ENCODE measurements at regions of chr20 and their contacts with region 1.

Region 1: DNA sequence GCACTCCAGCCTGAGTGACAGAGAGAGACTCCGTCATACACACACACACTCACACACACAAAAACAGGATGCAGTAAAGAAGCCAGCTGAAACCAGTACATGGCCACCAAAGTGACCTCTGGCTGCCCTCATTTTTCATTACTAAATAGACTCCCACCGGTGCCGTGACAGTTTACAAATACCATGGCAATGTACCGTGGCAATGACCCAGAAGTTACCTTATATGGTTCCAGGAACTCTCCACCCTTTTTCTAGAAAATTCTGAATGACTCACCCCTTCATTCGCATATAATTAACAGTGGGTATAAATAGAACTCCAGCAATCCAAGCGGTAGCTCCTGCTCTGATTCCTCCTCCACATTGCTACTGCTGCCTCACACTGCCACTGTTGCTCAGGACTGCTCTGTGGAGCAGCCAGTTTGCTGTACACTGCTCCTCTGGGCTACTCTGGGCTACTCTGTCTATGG is 57.7 kb downstream of the SNX5 start:
- DNase-seq: no peak
- H3K4me3 ChIP-seq: no peak overlapping the region
- H3K27ac ChIP-seq: peak overlapping the region; percentile 62 to 88
- H3K4me1 ChIP-seq: peaks cover 0 to 4% of the 10 kb centered on the region in 2 donors
- H3K27me3 ChIP-seq: no peaks in the 10 kb centered on the region
- CTCF ChIP-seq: no peak
- POLR2A ChIP-seq: no peak

Region 2: GRCh38 chr20:17536944-17537444 is 373.9 kb before region 1 on chr20:
- intact Hi-C with region 1: loop called (anchors 5 kb)
- DNase-seq: peak; percentile 65 to 74
- H3K4me3 ChIP-seq: no peak overlapping the region
- H3K27ac ChIP-seq: no peak overlapping the region
- H3K4me1 ChIP-seq: no peaks in the 10 kb centered on the region
- H3K27me3 ChIP-seq: no peaks in the 10 kb centered on the region
- CTCF ChIP-seq: peak; percentile 99
- POLR2A ChIP-seq: no peak

Region 3: DNA sequence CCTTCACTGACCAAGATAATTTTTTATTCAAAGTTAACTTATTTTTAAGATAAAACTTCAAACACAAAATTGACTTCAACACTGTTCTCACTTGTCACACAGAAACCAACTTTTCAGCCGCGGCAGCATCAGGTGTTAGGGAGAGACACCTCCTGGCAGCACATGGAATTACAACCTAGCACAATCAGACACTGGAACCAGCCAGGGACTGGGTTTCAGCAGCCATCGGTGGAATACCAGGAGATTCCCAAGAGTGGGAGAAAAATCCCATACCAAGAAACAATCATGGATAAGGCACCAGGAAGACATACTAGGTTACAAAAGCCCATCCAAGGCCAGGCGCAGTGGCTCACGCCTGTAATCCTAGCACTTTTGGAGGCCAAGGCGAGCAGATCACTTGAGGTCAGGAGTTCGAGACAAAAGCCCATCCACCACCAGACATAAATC is 12.3 kb before region 1 on chr20:
- intact Hi-C with region 1: loop called (anchors 1 kb)
- DNase-seq: peak; percentile 76 to 83
- H3K4me3 ChIP-seq: no peak overlapping the region
- H3K27ac ChIP-seq: no peak overlapping the region
- H3K4me1 ChIP-seq: no peaks in the 10 kb centered on the region
- H3K27me3 ChIP-seq: no peaks in the 10 kb centered on the region
- CTCF ChIP-seq: peak; percentile 95 to 97 (median 97)
- POLR2A ChIP-seq: no peak

Measured in breast epithelium (tissue), 4 donors.